ENCODE measurements at regions of chr16 and their contacts with region 1.

Region 1: DNA sequence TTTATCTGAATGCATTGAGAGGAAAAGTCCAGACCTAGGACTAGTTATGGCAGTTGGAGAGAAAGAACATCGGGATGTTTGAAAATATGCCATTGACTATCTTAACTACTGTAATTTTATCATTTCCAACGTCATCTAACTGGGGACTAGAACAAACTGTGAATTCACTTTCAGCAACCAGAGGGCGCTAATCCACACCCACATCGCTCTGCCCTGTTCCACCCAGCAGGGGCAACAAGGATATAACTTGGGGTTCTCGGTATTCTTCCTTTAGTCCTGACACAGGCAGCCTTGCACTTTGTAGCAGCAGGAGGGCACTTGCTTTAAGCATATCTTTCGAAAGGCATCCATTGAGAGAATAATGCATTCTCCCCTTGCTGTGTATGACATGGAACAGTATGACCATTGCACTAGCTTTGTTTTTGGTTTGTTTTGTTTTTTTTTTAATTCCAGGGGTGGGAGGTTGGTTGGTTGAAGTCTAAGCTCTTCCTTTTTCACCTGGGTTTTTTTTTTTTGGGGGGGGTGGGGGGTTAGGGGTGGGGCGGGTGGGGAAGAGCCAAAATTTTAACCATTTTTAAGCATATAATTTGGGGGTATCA is 31.5 kb downstream of the SIAH1 start:
- DNase-seq: no peak
- H3K4me3 ChIP-seq: no peak overlapping the region
- H3K27me3 ChIP-seq: no peaks in the 10 kb centered on the region
- CTCF ChIP-seq: peak; percentile 88

Region 2: GRCh38 chr16:48385272-48386150 is 31.8 kb after region 1 on chr16 and contains the start of gene SIAH1:
- CTCF ChIA-PET with region 1: no interaction called
- POLR2A ChIA-PET with region 1: no interaction called
- DNase-seq: peak; percentile 56
- H3K4me3 ChIP-seq: peak within 1 kb of the TSS; percentile 83
- H3K27me3 ChIP-seq: no peaks in the 10 kb centered on the region
- CTCF ChIP-seq: no peak
- polyA plus RNA-seq, gene SIAH1: 11.7 and 18.3 TPM in 2 replicates

Region 3: DNA sequence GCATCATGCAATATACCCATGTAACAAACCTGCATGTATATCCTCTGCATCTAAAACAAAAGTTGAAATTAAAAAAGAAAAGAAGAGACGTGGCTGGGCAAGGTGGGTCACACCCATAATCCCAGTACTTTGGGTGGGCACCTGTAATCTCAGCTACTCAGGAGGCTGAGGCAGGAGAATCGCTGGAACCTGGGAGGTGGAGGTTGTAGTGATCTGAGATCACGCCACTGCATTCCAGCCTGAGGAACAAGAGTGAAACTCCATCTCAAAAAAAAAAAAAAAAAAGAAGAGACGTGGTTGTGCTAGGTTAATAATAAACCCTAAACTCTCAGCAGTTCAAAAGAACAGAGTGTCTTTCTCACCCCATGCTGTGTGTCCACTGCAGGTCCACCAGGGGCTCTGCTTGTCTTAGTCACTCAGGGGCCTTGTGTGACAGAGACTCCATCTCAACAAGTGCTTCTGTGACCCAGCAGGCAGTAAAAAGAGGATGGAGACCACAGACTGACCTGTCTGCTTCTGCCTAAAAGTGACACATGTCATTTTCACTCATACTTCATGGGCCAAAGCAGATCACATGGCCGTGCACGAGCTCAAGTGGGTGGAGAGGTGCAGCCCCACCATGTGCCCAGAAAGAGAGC is 278.6 kb after region 1 on chr16:
- CTCF ChIA-PET with region 1: interaction called, 33 read pairs
- POLR2A ChIA-PET with region 1: no interaction called
- DNase-seq: no peak
- H3K4me3 ChIP-seq: no peak overlapping the region
- H3K27me3 ChIP-seq: no peaks in the 10 kb centered on the region; the same call in 1 of the 2 replicates
- CTCF ChIP-seq: no peak